Esophagus muscularis mucosa (tissue), 4 donors: ENCODE measurements at regions of chr14 and their contacts with region 1.

Region 1: DNA sequence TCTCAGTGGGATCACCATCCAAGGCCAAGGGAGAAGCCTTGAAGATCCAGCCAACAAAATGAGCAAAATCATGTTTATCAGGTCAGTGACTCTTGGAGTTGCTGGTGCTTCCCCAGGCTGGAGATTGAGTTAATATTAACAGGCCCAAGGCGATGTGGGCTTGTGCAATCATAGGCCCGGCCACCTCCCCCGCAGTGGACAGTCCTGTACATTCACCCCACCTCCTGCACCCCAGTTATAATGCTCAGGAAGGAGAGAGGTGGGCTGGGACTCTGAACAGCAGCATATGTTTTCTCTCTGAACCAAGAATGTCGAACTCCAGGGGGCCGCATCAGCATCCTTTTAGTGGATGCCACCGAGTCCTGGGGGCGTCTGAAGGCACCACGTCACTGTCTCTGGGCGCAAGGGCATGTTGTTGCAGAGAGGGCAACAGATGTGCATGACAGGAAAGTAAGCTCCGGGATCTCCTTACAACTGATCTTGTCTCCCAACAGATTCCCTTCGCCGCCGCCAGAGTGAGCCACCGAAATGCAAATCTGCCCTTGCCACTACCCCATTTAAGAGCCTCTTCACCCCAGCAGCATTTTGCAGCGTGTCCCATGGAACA is 32.2 kb upstream of the SERPINA6 start:
- DNase-seq: peak; percentile 91
- H3K4me3 ChIP-seq: no peak overlapping the region
- H3K27ac ChIP-seq: no peak overlapping the region
- H3K4me1 ChIP-seq: no peaks in the 10 kb centered on the region
- H3K27me3 ChIP-seq: peaks cover 0 to 18% (median 0%) of the 10 kb centered on the region in 4 donors
- CTCF ChIP-seq: peak; percentile 18 to 42 (median 19)
- EP300 ChIP-seq: no peak
- POLR2A ChIP-seq: no peak

Region 2: GRCh38 chr14:94485944-94486841 is 130.9 kb after region 1 on chr14:
- intact Hi-C with region 1: loop called (anchors 10 kb)
- DNase-seq: no peak
- H3K4me3 ChIP-seq: peak overlapping the region in 2 of 4 donors; percentile 2 to 28
- H3K27ac ChIP-seq: no peak overlapping the region
- H3K4me1 ChIP-seq: peaks cover 4 to 9% (median 8%) of the 10 kb centered on the region in 4 donors
- H3K27me3 ChIP-seq: peaks cover 0 to 56% (median 2%) of the 10 kb centered on the region in 4 donors
- CTCF ChIP-seq: peak in 2 of 3 experiments; percentile 89 to 94
- EP300 ChIP-seq: no peak
- POLR2A ChIP-seq: no peak